MCF 10A (cell line): ENCODE measurements at regions of chr16 and their contacts with region 1.

Region 1: GRCh38 chr16:23124315-23124714 is 24.9 kb downstream of the USP31 start:
- DNase-seq: peak; percentile 84
- H3K4me3 Mint-ChIP-seq: peak overlapping the region; percentile 45
- H3K27ac Mint-ChIP-seq: peak overlapping the region; percentile 91
- H3K4me1 Mint-ChIP-seq: peaks cover 49% of the 10 kb centered on the region
- H3K27me3 Mint-ChIP-seq: no peaks in the 10 kb centered on the region
- CTCF ChIP-seq: no peak

Region 2: DNA sequence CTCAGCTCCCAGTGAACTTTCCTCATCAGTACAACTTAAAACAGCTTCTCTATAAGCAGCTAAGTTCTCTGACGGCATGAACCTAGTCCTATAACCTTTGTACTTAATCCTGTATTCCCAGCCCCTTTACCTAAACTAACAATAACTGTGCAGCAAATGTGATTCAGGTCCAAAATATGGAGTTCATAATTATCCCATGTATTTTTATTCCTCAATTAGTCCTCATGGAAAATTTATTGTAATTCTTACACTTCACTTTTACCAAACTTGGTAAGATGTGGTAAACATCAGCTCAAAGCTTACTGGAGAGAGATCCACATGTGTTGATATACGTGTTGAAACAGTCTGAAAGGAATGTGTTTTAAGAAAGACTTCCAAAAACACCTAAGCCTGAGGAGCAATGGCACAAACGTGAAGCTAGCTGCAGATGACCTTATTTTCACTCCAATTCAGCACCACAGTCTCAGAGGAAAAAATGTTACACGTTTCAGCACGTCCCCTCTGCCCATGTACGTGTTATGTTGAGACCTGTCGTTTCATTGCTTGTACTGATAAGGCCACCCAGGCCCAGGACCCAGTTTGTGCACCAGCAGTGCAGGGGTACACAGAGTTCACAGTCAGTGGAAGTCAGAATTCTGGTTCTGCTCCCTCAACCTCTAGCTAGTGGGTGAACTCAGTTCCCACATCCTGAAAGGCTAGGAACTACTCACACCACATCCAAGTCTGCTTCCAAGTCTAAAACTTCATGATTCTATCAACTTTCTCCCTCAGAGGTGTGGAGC is 17.8 kb after region 1 on chr16:
- CTCF ChIA-PET with region 1: interaction called, 15 read pairs
- POLR2A ChIA-PET with region 1: interaction called, 63 read pairs
- intact Hi-C with region 1: no loop called
- DNase-seq: peak; percentile 25
- H3K4me3 Mint-ChIP-seq: no peak overlapping the region
- H3K27ac Mint-ChIP-seq: no peak overlapping the region
- H3K4me1 Mint-ChIP-seq: peaks cover 18% of the 10 kb centered on the region
- H3K27me3 Mint-ChIP-seq: no peaks in the 10 kb centered on the region
- CTCF ChIP-seq: no peak